ENCODE measurements at regions of chr14 and their contacts with region 1.

Region 1: GRCh38 chr14:73526569-73526968 is 10.4 kb upstream of the ACOT1 start:
- DNase-seq: no peak
- H3K4me3 ChIP-seq: no peak overlapping the region
- H3K27ac ChIP-seq: no peak overlapping the region
- H3K4me1 ChIP-seq: no peaks in the 10 kb centered on the region
- H3K27me3 ChIP-seq: no peaks in the 10 kb centered on the region
- CTCF ChIP-seq: no peak

Region 2: DNA sequence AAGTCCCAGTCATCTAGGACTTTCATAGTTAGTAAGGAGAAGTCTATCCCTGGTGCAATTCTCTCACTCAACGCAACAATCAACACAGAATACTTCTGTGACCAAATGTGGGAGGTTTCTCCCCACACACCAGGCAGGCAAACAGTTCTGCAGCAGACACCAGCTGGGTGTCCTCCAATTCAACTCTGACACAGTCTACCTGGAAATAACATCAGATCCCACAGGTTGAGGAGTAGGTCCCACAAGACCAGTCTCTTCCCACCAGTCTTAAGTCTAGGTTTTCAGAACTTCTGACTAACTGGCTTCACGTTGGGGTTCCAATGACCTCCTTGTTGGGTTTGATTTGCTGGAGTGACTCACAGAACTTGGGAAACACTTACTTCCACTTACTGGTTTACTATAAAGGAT is 100.6 kb after region 1 on chr14:
- intact Hi-C with region 1: loop called (anchors 10 kb)
- DNase-seq: no peak
- H3K4me3 ChIP-seq: no peak overlapping the region
- H3K27ac ChIP-seq: no peak overlapping the region
- H3K4me1 ChIP-seq: no peaks in the 10 kb centered on the region
- H3K27me3 ChIP-seq: no peaks in the 10 kb centered on the region
- CTCF ChIP-seq: no peak

Region 3: GRCh38 chr14:73924337-73924736 is 397.8 kb after region 1 on chr14:
- intact Hi-C with region 1: no loop called
- DNase-seq: no peak
- H3K4me3 ChIP-seq: no peak overlapping the region
- H3K27ac ChIP-seq: no peak overlapping the region
- H3K4me1 ChIP-seq: no peaks in the 10 kb centered on the region
- H3K27me3 ChIP-seq: no peaks in the 10 kb centered on the region
- CTCF ChIP-seq: no peak